ENCODE measurements at regions of chr2 and their contacts with region 1.

Region 1: DNA sequence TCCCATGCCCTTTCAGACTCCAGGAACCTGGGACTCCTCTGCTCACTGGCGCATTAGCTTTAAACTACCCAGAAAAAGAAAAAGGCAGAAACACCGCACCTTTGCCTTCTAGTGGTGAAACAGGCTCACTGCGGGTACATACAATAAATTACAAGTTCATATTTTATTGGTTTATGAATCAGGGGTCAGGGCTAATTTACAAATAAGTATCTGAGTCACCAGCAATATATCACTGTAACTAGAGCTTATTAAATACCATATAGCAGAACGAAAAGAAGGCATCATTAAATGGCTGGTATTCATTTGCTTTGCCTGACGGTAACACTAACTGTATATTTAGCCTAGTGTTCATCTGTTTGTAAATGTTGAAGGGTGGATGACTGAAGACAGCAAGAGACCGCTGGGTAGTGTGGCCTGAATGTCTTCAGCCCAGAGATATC is 26.9 kb upstream of the DTNB start:
- DNase-seq: no peak
- ATAC-seq: peak; percentile 54
- H3K4me3 Mint-ChIP-seq: no peak overlapping the region
- H3K27ac Mint-ChIP-seq: no peak overlapping the region
- H3K4me1 Mint-ChIP-seq: no peaks in the 10 kb centered on the region
- H3K27me3 Mint-ChIP-seq: no peaks in the 10 kb centered on the region; the same call in 1 of the 2 replicates
- CTCF ChIP-seq: peak; percentile 53

Region 2: DNA sequence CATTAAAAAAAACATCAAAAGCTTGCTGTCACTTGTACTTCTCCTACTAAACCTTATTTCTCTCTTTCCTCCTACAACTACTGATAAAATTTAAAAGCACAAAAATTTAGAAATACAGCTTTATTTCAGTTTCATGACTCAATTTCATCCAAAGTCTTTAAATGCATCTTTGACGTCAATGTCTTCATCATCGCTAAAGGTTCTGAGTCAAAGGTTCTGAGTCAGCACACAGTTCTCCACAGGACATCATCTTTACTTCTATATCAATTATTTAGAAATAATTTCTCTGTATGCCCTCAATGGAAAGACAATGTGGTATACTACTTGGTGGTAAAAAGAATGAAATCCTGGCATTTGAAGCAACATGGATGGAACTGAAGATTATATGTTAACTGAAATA is 194.6 kb before region 1 on chr2:
- CTCF ChIA-PET with region 1: no interaction called
- POLR2A ChIA-PET with region 1: no interaction called
- DNase-seq: no peak
- ATAC-seq: no peak
- H3K4me3 Mint-ChIP-seq: no peak overlapping the region
- H3K27ac Mint-ChIP-seq: no peak overlapping the region
- H3K4me1 Mint-ChIP-seq: no peaks in the 10 kb centered on the region
- H3K27me3 Mint-ChIP-seq: no peaks in the 10 kb centered on the region
- CTCF ChIP-seq: no peak

Region 3: GRCh38 chr2:25606892-25607291 is 93.3 kb before region 1 on chr2:
- CTCF ChIA-PET with region 1: interaction called, 68 read pairs
- POLR2A ChIA-PET with region 1: no interaction called
- DNase-seq: no peak
- ATAC-seq: no peak
- H3K4me3 Mint-ChIP-seq: no peak overlapping the region
- H3K27ac Mint-ChIP-seq: no peak overlapping the region
- H3K4me1 Mint-ChIP-seq: no peaks in the 10 kb centered on the region; the same call in 1 of the 2 replicates
- H3K27me3 Mint-ChIP-seq: no peaks in the 10 kb centered on the region
- CTCF ChIP-seq: 0 out of 2 replicates have a peak, but pooled peaks have one; percentile 21

Region 4: GRCh38 chr2:25673300-25674076 is 26.8 kb before region 1 on chr2 and contains the start of gene DTNB:
- CTCF ChIA-PET with region 1: interaction called, 48 read pairs
- POLR2A ChIA-PET with region 1: interaction called, 3 read pairs
- DNase-seq: peak; percentile 85
- ATAC-seq: peak; percentile 68
- H3K4me3 Mint-ChIP-seq: peak within 1 kb of the TSS; percentile 87
- H3K27ac Mint-ChIP-seq: peak within 1 kb of the TSS; percentile 79; the same call in 1 of the 2 replicates
- H3K4me1 Mint-ChIP-seq: peaks cover 38% of the 10 kb centered on the region
- H3K27me3 Mint-ChIP-seq: peaks cover 34% of the 10 kb centered on the region
- CTCF ChIP-seq: no peak
- total RNA-seq, gene DTNB: 39.9 to 46.3 TPM (median 44.5 TPM) in 3 replicates

Region 5: GRCh38 chr2:25710750-25711149 is 10.5 kb after region 1 on chr2:
- CTCF ChIA-PET with region 1: interaction called, 15 read pairs
- POLR2A ChIA-PET with region 1: interaction called, 3 read pairs
- DNase-seq: no peak
- ATAC-seq: no peak
- H3K4me3 Mint-ChIP-seq: no peak overlapping the region
- H3K27ac Mint-ChIP-seq: no peak overlapping the region
- H3K4me1 Mint-ChIP-seq: no peaks in the 10 kb centered on the region
- H3K27me3 Mint-ChIP-seq: no peaks in the 10 kb centered on the region
- CTCF ChIP-seq: no peak

Region 6: GRCh38 chr2:25844089-25844488 is 143.8 kb after region 1 on chr2:
- CTCF ChIA-PET with region 1: no interaction called
- POLR2A ChIA-PET with region 1: no interaction called
- DNase-seq: no peak
- ATAC-seq: no peak
- H3K4me3 Mint-ChIP-seq: no peak overlapping the region
- H3K27ac Mint-ChIP-seq: no peak overlapping the region
- H3K4me1 Mint-ChIP-seq: no peaks in the 10 kb centered on the region
- H3K27me3 Mint-ChIP-seq: no peaks in the 10 kb centered on the region
- CTCF ChIP-seq: no peak

Measured in WTC11 (cell line).